Motor neuron (in vitro differentiated cells): ENCODE measurements at regions of chr4 and their contacts with region 1.

Region 1: GRCh38 chr4:147096667-147097604 is 151.3 kb upstream of the TTC29 start:
- ATAC-seq: peak in 4 of 8 experiments; percentile 55 to 68 (median 66)
- H3K4me3 ChIP-seq: no peak overlapping the region
- H3K27ac ChIP-seq: no peak overlapping the region
- H3K4me1 ChIP-seq: no peaks in the 10 kb centered on the region

Region 2: DNA sequence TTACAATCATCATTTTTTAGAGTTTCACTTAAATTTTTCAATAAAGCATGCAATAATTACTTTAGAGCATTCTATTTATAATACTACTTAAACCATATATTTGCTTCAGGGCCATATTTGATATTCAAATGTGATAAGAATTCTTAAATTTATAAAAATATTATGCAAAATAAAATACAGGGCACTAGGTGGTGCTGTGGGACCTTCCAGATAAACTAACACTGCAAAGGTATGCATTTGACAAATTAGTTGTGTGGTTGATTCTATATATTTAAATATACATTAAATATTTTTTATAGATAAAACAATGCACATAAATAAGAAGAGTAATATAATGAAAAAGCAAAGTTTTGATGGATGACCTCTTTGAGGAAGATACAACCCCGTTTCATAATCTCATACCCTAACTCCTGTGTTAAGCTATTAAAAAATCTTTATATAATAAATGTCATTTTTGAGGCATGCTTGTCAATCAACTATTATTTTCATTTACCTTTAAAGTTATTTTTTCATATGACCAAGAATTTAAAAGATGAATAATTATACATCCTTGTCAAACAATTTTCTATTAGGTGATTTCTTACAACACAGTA is 754.2 kb before region 1 on chr4:
- in situ Hi-C with region 1: loop called in 2 of 9 experiments (anchors 25 kb)
- ATAC-seq: no peak
- H3K4me3 ChIP-seq: no peak overlapping the region
- H3K27ac ChIP-seq: no peak overlapping the region
- H3K4me1 ChIP-seq: peaks cover 0 to 3% of the 10 kb centered on the region in 2 donors

Region 3: DNA sequence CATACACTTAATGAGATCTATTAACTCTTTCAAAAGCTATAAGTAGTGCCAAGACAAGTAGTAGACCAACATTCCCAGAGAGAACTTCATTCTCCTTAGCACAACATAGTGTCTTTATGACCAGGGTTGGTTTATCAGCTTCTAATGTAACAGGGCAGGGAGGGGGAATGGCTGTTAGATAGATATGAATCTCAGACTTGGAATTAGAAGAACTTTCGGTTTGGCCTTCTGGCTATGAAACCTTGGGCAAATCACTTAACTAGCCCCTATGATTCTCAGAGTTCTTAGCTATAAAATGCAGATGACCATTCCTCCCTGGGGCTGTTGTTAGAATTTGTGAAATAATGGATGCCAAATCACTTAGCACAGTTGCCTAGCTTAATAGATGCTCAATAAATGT is 707.4 kb before region 1 on chr4:
- in situ Hi-C with region 1: no loop called
- ATAC-seq: no peak
- H3K4me3 ChIP-seq: no peak overlapping the region
- H3K27ac ChIP-seq: no peak overlapping the region
- H3K4me1 ChIP-seq: no peaks in the 10 kb centered on the region

Region 4: DNA sequence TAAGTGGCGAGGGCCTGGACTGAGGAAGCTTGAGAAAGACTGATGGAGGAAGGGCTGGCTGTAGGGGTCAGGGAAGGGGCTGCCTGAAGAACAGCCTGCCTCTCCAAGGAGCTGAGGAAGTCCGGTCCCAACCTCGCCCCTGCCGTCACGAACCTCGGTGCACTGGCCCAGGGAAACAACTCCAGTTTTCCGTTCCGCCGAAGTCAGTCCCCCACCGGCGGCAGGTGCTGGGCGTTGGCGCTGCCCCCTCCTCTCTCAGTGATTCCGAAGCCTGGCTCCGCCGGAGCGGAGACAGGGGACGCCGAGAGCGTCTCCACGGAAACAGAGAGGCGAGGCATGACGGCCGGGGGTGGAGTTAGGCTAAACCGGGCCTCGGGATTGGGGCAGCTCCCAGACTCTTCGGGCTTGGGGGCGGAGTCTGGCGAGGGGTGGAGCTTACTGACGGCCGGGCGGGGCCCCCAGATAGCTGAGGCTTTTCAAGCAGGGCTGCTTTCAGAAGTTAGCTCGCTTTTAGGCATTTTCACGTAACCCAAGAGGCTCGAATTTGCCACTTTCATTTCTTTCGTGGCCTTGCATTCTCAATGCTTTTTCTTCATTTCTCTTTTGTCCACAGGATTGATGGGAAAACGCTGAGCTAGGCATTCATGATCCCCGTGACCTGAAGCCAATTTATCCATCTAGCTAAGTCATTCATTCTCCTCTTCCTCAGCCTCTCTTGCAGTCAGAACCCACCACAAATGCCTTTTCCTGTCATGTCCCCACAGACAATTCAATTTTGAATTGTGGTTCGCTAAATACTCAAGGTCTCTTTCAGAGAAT is 151.2 kb before region 1 on chr4 and contains the start of gene TTC29:
- in situ Hi-C with region 1: loop called in 1 of 9 experiments (anchors 25 kb)
- ATAC-seq: peak; percentile 100
- H3K4me3 ChIP-seq: peak within 1 kb of the TSS; percentile 33 to 60 (median 43)
- H3K27ac ChIP-seq: no peak within 1 kb of the TSS
- H3K4me1 ChIP-seq: no peaks in the 10 kb centered on the region
- total RNA-seq, gene TTC29: 0.22 to 7.7 (median 0.81) TPM in 7 of 8 experiments, not detected in the other

Region 5: DNA sequence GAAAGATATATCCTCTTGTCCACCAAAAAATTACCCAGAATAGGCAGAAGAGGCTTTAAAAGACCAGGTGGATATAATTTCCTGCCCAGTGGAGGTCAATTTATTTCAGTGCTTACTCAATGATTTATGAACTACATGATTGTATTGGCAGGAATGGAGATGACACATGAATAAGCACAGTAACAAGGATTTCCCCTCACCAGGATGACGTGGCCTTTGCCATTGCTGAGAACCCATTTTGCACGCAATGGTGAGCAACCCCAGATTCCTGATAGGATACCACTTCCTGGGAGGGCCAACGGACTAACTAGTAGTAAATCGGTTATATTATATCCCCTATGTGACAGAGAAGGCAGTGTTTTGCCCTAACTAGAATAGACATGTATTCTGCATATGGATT is 139.7 kb before region 1 on chr4:
- in situ Hi-C with region 1: no loop called
- ATAC-seq: peak in 3 of 8 experiments; percentile 16 to 92 (median 80)
- H3K4me3 ChIP-seq: no peak overlapping the region
- H3K27ac ChIP-seq: no peak overlapping the region
- H3K4me1 ChIP-seq: no peaks in the 10 kb centered on the region

Region 6: GRCh38 chr4:147019061-147019460 is 77.9 kb before region 1 on chr4:
- in situ Hi-C with region 1: loop called in 1 of 9 experiments (anchors 5 kb)
- ATAC-seq: peak in 3 of 8 experiments; percentile 88 to 89 (median 89)
- H3K4me3 ChIP-seq: no peak overlapping the region
- H3K27ac ChIP-seq: no peak overlapping the region
- H3K4me1 ChIP-seq: no peaks in the 10 kb centered on the region

Region 7: DNA sequence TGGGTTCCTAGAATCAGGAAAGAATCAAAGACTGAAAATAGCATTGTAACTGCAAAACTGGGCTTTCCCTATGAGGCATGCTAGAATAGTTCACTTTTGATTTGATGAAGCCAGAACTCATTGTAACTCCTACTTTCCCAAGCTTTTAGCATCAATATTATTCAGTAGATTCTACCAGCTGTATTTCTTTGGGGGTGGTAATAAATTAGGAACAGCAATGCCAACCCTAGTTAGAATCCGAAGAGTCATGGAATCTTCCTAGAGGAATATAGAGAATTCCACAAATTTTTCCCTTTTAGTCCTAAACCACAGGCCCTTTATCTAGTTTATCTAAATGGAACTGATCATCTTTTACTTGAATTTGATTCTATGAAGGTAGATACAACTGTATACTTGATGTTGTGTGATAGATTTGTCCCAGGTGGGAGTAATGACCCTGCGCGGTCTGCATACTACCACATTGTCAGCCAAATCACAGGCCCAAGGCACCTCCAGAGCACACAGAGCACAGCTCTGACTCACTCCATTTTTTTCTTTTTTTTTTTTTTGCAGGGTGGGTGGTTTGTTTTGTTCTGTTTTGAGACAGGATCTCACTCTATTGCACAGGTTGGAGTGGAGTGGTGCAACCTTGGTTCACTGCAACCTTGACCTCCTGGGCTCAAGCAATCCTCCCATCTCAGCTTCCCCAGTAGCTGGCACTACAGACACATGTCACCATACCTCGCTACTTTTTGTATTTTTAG is 450.5 kb after region 1 on chr4:
- in situ Hi-C with region 1: no loop called
- ATAC-seq: peak in 1 of 8 experiments; percentile 19
- H3K4me3 ChIP-seq: no peak overlapping the region
- H3K27ac ChIP-seq: no peak overlapping the region
- H3K4me1 ChIP-seq: no peaks in the 10 kb centered on the region

Region 8: DNA sequence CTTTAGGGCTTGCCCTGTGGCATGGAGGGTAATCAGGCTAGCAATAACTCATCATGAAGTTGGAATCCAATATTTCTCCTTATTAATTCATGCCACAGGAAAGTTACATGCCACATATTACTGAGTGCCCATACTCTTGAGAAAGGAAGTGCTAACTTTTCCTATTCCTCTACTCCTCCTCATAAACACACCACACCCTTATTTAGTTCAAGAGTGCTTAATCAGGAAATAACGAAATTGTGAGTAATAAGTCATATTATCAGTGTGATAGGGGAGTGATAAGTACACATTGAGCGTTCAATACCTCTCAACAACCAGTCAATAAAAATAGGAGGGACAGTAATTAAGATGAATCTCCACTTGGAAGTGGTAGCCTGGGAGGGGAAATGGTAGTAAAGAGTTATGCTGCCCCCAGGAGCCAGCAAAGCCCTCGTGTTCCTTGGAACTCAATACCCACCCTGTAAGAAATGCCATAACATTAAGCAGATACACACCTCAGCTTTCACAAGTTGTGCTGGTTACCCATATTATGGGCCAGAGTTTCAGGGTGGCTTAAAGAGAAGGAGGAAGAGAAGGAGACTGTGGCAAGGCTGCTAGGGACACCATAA is 1755.3 kb after region 1 on chr4:
- in situ Hi-C with region 1: no loop called
- ATAC-seq: no peak
- H3K4me3 ChIP-seq: no peak overlapping the region
- H3K27ac ChIP-seq: no peak overlapping the region
- H3K4me1 ChIP-seq: no peaks in the 10 kb centered on the region